Esophagus squamous epithelium (tissue), 5 donors: ENCODE measurements at regions of chr20 and their contacts with region 1.

Region 1: GRCh38 chr20:46174469-46175128 is 56.5 kb downstream of the CD40 start:
- DNase-seq: no peak
- H3K4me3 ChIP-seq: peak overlapping the region in 1 of 4 donors; percentile 45
- H3K27ac ChIP-seq: no peak overlapping the region
- H3K4me1 ChIP-seq: peaks cover 0 to 13% (median 0%) of the 10 kb centered on the region in 3 donors
- H3K27me3 ChIP-seq: peaks cover 0 to 91% (median 9%) of the 10 kb centered on the region in 4 donors
- CTCF ChIP-seq: peak; percentile 17 to 76 (median 62)
- POLR2A ChIP-seq: no peak

Region 2: GRCh38 chr20:46022411-46023147 is 152.0 kb before region 1 on chr20:
- intact Hi-C with region 1: loop called (anchors 10 kb)
- DNase-seq: no peak
- H3K4me3 ChIP-seq: peak overlapping the region in 1 of 4 donors; percentile 64
- H3K27ac ChIP-seq: no peak overlapping the region
- H3K4me1 ChIP-seq: peaks cover 14 to 21% (median 16%) of the 10 kb centered on the region in 3 donors
- H3K27me3 ChIP-seq: peaks cover under 1 to 99% (median 13%) of the 10 kb centered on the region in 4 donors
- CTCF ChIP-seq: peak; percentile 53 to 83 (median 67)
- POLR2A ChIP-seq: no peak

Region 3: GRCh38 chr20:46215913-46216707 is 41.5 kb after region 1 on chr20:
- intact Hi-C with region 1: no loop called
- DNase-seq: no peak
- H3K4me3 ChIP-seq: no peak overlapping the region
- H3K27ac ChIP-seq: no peak overlapping the region
- H3K4me1 ChIP-seq: peaks cover 0 to 6% (median 0%) of the 10 kb centered on the region in 3 donors
- H3K27me3 ChIP-seq: peaks cover 0 to 53% (median 0%) of the 10 kb centered on the region in 4 donors
- CTCF ChIP-seq: no peak
- POLR2A ChIP-seq: no peak

Region 4: GRCh38 chr20:46349035-46349741 is 174.6 kb after region 1 on chr20:
- intact Hi-C with region 1: no loop called
- DNase-seq: no peak
- H3K4me3 ChIP-seq: no peak overlapping the region
- H3K27ac ChIP-seq: no peak overlapping the region
- H3K4me1 ChIP-seq: peaks cover 0 to 20% (median 6%) of the 10 kb centered on the region in 3 donors
- H3K27me3 ChIP-seq: no peaks in the 10 kb centered on the region
- CTCF ChIP-seq: peak; percentile 50 to 82 (median 71)
- POLR2A ChIP-seq: no peak